ENCODE measurements at regions of chr1 and their contacts with region 1.

Region 1: GRCh38 chr1:70134148-70134547 is 71.2 kb downstream of the LRRC40 start:
- DNase-seq: no peak
- H3K4me3 ChIP-seq: no peak overlapping the region
- H3K27ac ChIP-seq: no peak overlapping the region
- H3K4me1 ChIP-seq: peaks cover 4% of the 10 kb centered on the region
- H3K27me3 ChIP-seq: no peaks in the 10 kb centered on the region
- CTCF ChIP-seq: no peak

Region 2: GRCh38 chr1:70205434-70206118 is 71.4 kb after region 1 on chr1 and contains the start of gene LRRC40:
- intact Hi-C with region 1: loop called (anchors 10 kb)
- DNase-seq: peak; percentile 98
- H3K4me3 ChIP-seq: peak within 1 kb of the TSS; percentile 87
- H3K27ac ChIP-seq: peak within 1 kb of the TSS; percentile 76
- H3K4me1 ChIP-seq: no peaks in the 10 kb centered on the region
- H3K27me3 ChIP-seq: no peaks in the 10 kb centered on the region
- CTCF ChIP-seq: no peak
- total RNA-seq, gene LRRC40: 10.2 to 10.7 TPM

Region 3: DNA sequence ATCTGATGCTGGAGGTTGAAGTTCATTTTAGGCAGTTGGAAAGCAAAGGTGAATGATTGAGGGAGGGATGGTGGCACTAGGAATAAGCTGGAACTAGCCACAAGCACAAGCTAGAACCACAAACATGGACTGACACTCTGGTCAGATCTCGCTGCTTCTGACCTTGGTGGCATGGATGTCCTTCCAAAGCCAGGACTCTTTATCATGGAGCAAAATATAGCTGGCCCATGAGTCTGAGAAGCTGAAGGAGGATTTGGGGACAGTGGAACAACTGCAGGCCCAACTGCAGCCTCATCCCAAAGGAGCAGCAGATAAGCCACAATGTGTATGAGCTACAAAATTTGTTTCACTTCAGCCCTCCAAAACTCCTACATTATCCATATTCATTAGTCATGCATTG is 122.5 kb after region 1 on chr1:
- intact Hi-C with region 1: no loop called
- DNase-seq: no peak
- H3K4me3 ChIP-seq: no peak overlapping the region
- H3K27ac ChIP-seq: no peak overlapping the region
- H3K4me1 ChIP-seq: no peaks in the 10 kb centered on the region
- H3K27me3 ChIP-seq: no peaks in the 10 kb centered on the region
- CTCF ChIP-seq: no peak

Region 4: DNA sequence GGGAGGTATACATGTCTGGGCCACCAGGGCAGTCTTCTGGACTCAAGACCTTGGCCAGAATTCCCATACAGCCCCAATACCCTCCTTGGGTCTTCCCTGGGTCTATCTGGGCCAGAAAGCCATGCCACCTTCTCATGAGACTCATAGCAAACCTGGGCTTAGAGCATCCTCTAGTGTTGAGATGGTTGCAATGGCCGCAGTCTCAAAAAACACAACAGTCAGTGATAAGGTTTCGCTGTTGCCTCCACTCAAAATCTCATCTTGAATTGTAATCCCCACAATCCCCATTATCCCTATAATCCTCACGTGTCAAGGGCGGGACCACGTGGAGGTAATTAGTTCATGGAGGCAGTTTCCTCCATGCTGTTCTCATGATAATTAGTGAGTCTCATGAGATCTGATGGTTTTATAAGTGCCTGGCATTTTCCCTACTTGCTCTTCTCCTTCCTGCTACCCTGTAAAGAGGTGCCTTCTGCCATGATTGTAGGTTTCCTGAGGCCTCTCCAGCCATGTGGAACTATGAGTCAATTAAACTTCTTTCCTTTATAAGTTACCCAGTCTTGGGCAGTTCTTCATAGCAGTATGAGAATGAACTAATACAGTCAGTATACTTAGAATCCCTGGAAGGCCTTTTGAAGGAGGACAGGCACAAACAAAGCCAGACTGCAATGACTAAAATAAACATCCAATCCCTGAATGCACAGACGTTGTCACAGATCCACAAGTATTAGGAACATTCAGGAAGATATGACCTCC is 353.9 kb after region 1 on chr1:
- intact Hi-C with region 1: loop called (anchors 5 kb)
- DNase-seq: peak; percentile 27
- H3K4me3 ChIP-seq: no peak overlapping the region
- H3K27ac ChIP-seq: no peak overlapping the region
- H3K4me1 ChIP-seq: no peaks in the 10 kb centered on the region
- H3K27me3 ChIP-seq: no peaks in the 10 kb centered on the region
- CTCF ChIP-seq: peak; percentile 48

Region 5: DNA sequence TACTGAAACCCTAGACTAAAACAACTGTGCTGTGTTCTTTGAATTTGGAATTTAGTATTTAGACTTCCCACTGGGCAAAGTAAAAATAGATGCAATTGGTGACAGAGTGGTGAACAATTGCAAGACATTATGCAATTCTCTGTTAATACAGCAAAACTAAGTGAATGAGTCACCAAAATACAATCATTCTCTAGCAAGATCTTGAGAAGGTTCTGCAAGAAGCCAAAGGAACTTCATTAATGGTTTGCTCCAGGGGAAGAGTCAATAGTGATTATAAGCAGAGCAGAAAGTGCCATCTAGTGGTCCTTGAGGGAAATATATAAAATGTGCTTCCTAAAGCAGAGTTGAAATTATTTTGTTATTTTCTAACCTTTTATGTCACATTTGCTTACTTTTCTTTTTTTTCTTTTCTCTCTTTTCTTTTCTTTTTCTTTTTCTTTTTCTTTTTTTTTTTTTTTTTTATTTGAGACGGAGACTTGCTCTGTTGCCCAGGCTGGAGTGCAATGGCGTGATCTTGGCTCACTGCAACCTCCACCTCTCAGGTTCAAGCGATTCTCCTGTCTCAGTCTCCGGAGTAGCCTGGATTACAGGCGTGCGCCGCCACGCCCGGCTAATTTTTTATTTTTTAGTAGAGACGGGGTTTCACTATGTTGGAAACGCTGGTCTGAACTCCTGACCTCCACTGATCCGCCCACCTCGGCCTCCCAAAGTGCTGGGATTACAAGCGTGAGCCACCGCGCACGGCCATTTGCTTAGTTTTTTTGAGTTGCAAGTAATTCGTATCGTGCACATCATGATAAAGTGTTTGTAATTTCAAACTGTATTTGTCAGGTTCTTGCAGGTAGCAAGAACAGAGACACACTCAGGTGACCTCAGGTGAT is 376.1 kb after region 1 on chr1:
- intact Hi-C with region 1: loop called (anchors 5 kb)
- DNase-seq: no peak
- H3K4me3 ChIP-seq: no peak overlapping the region
- H3K27ac ChIP-seq: no peak overlapping the region
- H3K4me1 ChIP-seq: no peaks in the 10 kb centered on the region
- H3K27me3 ChIP-seq: no peaks in the 10 kb centered on the region
- CTCF ChIP-seq: peak; percentile 65

Measured in colonic mucosa (tissue), 4 donors.